Thyroid gland (tissue), 4 donors: ENCODE measurements at regions of chr2 and their contacts with region 1.

Region 1: GRCh38 chr2:128321784-128322714 is 3.4 kb upstream of the HS6ST1 start:
- DNase-seq: peak; percentile 85 to 87
- H3K4me3 ChIP-seq: peak overlapping the region in 2 of 3 donors; percentile 28 to 48
- H3K27ac ChIP-seq: peak overlapping the region; percentile 37 to 77 (median 48)
- H3K4me1 ChIP-seq: peaks cover 15% of the 10 kb centered on the region in 2 donors
- H3K27me3 ChIP-seq: no peaks in the 10 kb centered on the region
- CTCF ChIP-seq: peak; percentile 3 to 99 (median 96)
- POLR2A ChIP-seq: peak in 1 of 2 donors; percentile 69

Region 2: DNA sequence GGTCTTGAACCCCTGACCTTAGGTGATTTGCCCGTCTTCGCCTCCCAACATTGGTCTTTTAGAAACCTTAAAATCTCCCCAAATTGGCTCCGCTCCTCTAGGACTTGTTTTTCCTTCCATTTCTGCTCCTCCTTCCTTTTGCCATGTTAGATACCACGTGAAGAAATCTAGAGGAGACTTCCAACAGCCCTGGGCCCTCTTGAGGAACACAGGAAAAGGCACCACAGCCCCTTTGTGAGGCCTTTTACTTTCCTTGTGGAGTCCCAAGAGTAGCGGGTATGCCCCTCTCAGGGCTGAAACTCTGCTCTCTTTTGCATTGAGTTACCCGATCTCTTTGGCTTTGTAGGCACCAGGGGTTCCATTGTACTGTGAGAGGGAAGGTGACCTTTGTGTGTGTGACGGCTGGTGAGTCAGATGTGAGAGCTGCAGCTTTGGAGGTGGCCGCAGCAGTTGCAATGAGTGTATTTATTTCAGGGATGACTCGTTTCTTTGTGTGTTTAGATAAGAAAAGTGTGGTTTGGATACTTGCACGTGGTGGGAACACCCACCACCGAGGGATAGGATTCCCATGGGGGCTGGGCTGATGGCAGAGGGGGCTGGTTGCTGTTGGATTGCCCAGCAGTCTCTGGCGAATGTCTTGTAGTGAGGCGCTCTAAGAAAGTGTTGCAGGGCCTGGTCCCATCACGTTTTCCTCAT is 215.0 kb after region 1 on chr2:
- intact Hi-C with region 1: loop called (anchors 10 kb)
- DNase-seq: no peak
- H3K4me3 ChIP-seq: no peak overlapping the region
- H3K27ac ChIP-seq: no peak overlapping the region
- H3K4me1 ChIP-seq: no peaks in the 10 kb centered on the region
- H3K27me3 ChIP-seq: no peaks in the 10 kb centered on the region
- CTCF ChIP-seq: no peak
- POLR2A ChIP-seq: no peak

Region 3: GRCh38 chr2:128607911-128608506 is 286.0 kb after region 1 on chr2:
- intact Hi-C with region 1: loop called (anchors 10 kb)
- DNase-seq: peak; percentile 98 to 99
- H3K4me3 ChIP-seq: no peak overlapping the region
- H3K27ac ChIP-seq: peak overlapping the region; percentile 67 to 76 (median 71)
- H3K4me1 ChIP-seq: peaks cover 5 to 21% of the 10 kb centered on the region in 2 donors
- H3K27me3 ChIP-seq: no peaks in the 10 kb centered on the region
- CTCF ChIP-seq: peak in 2 of 6 experiments; percentile 23 to 27
- POLR2A ChIP-seq: peak in 1 of 2 donors; percentile 43

Region 4: GRCh38 chr2:129443235-129443864 is 1121.3 kb after region 1 on chr2:
- intact Hi-C with region 1: no loop called
- DNase-seq: no peak
- H3K4me3 ChIP-seq: no peak overlapping the region
- H3K27ac ChIP-seq: no peak overlapping the region
- H3K4me1 ChIP-seq: no peaks in the 10 kb centered on the region
- H3K27me3 ChIP-seq: no peaks in the 10 kb centered on the region
- CTCF ChIP-seq: no peak
- POLR2A ChIP-seq: no peak